ENCODE measurements at regions of chr12 and their contacts with region 1.

Region 1: DNA sequence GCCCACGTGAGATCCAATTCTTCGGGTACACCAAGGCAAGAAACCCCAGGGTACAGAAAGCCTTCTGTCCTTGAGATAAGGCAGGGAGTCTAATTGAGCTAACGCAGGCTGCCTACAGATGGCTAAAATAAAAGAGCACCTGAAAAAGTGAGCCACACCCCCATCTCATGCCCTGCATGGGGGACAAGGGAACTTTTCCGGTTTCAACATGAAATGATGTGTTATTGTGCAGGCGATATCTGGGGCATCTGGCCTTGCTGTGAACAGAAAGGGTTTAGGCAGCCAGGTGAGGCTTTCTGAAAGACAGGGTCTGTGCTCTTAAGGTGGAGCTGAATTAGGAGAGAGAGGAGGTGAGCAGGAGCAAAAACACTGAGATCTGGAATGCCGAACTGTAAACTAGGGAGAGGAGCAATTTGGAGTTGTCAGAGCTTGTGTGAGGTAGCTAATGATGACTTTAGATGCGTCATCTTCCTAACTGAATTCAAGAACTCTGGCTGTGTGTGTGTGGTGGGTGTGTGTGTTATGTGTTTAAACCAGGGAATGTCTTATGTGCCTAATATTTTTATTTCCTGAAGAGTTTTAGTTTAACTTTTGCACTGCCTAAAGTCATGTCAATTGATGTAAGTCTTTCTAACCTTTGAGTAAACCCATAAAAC is 20.1 kb upstream of the LDHB start:
- DNase-seq: peak; percentile 25
- ATAC-seq: peak; percentile 31
- H3K4me3 Mint-ChIP-seq: peak overlapping the region; percentile 21
- H3K27ac Mint-ChIP-seq: peak overlapping the region; percentile 84
- H3K4me1 Mint-ChIP-seq: peaks cover 44% of the 10 kb centered on the region
- H3K27me3 Mint-ChIP-seq: no peaks in the 10 kb centered on the region
- CTCF ChIP-seq: no peak

Region 2: DNA sequence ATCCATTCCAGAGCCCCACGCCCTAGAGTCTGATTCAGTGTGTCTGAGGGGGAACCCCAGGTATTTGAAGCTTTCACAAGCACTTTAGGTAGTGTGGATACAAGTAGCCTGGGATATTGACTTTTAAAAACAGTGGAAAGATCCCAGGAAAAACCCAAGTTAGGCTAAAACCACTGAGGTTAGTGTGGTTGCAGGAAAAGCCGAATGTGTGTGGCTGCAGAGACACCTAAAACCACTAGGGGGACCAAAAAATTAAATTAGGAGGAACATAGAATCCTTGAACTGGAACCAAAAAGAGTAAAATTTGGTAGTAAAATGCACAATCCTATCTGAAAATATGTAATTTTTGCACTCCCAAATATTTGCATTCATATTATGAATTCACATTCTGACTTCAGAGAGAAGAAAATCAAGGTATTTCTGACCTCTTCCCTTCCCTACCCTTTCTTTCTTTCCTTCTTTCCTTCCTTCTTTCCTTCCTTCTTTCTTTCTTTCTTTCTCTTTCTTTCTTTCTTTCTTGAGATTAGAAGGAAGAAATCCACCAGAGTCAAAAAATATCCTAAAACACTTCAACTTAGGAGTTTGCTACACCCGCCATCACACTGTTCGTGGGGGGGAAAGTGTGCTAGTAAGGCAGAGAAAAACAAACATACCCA is 380.9 kb before region 1 on chr12:
- CTCF ChIA-PET with region 1: interaction called, 6 read pairs
- POLR2A ChIA-PET with region 1: no interaction called
- intact Hi-C with region 1: loop called (anchors 10 kb)
- DNase-seq: peak; percentile 4
- ATAC-seq: peak; percentile 30
- H3K4me3 Mint-ChIP-seq: no peak overlapping the region
- H3K27ac Mint-ChIP-seq: no peak overlapping the region
- H3K4me1 Mint-ChIP-seq: peaks cover 2% of the 10 kb centered on the region
- H3K27me3 Mint-ChIP-seq: peaks cover 5% of the 10 kb centered on the region
- CTCF ChIP-seq: peak; percentile 89

Region 3: GRCh38 chr12:21613931-21614330 is 63.8 kb before region 1 on chr12:
- CTCF ChIA-PET with region 1: interaction called, 12 read pairs
- POLR2A ChIA-PET with region 1: no interaction called
- intact Hi-C with region 1: loop called (anchors 2 kb)
- DNase-seq: no peak
- ATAC-seq: no peak
- H3K4me3 Mint-ChIP-seq: no peak overlapping the region
- H3K27ac Mint-ChIP-seq: peak overlapping the region; percentile 43
- H3K4me1 Mint-ChIP-seq: peaks cover 46% of the 10 kb centered on the region
- H3K27me3 Mint-ChIP-seq: no peaks in the 10 kb centered on the region
- CTCF ChIP-seq: no peak

Region 4: DNA sequence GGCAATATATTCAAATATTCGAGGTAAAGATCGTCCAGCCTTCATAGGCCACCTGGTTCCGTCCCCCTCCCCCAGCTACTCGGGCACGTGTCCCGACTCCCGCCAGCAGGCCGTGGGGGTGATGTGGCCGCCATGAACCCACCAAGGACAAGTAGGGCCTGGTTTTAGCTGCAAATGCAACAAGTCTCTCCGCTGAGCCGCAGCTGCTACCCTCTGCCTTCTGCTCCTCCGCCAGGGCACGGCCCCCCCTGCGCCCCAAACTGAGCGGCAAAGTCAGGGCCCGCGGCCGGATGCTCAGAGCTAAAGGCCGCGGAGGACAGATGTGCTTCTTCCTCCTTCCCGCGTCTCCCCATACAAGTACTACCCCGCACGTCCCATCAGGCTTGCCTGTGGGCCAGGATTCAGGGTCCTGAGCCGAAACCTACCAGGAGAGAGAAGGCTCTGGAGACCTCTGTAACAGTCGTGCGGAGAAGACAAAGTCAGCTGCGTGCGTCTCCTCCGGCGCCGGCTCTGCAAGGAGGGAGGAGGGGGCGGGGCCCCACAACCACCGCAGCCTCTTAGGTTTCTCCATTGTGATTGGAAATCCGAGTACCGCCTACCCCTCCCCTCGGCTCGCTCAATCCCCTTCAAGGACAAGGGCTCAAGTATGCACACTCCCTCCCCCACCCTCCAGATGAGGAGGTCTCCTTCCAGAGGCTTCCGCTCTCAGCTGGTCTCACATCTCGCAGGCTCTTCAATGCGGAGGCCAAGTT is 20.2 kb before region 1 on chr12 and contains the start of gene LDHB:
- CTCF ChIA-PET with region 1: interaction called, 25 read pairs
- POLR2A ChIA-PET with region 1: interaction called, 31 read pairs
- intact Hi-C with region 1: loop called (anchors 2 kb)
- DNase-seq: peak; percentile 99
- ATAC-seq: peak; percentile 97
- H3K4me3 Mint-ChIP-seq: peak within 1 kb of the TSS; percentile 81
- H3K27ac Mint-ChIP-seq: peak within 1 kb of the TSS; percentile 98
- H3K4me1 Mint-ChIP-seq: peaks cover 41% of the 10 kb centered on the region
- H3K27me3 Mint-ChIP-seq: no peaks in the 10 kb centered on the region
- CTCF ChIP-seq: no peak
- total RNA-seq, gene LDHB: 2,161 to 2,384 TPM